ENCODE measurements at regions of chrX and their contacts with region 1.

Region 1: DNA sequence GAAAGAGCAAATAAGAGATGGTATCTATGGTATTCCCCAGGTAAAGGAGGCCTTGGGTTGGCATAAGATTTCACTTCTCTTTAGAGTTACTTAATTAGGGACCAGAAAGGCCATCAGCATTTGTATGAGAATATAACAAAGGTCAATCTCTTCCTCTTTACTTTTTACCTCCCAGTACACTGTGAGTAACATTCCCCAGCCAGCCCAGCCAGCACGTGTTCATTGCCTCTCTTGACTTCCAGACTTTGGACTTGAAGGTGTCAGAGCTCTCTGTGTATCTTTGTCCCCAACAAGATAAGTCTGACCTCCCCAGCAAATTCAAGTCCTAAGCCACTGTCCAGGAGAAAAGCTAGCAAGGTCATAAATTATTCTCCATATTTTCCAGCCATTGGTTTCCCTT is 110.5 kb downstream of the AR start:
- DNase-seq: no peak
- H3K4me3 ChIP-seq: no peak overlapping the region
- H3K27ac ChIP-seq: no peak overlapping the region
- H3K4me1 ChIP-seq: no peaks in the 10 kb centered on the region
- H3K27me3 ChIP-seq: peaks cover 0 to 13% of the 10 kb centered on the region in 2 donors
- CTCF ChIP-seq: no peak
- POLR2A ChIP-seq: no peak

Region 2: DNA sequence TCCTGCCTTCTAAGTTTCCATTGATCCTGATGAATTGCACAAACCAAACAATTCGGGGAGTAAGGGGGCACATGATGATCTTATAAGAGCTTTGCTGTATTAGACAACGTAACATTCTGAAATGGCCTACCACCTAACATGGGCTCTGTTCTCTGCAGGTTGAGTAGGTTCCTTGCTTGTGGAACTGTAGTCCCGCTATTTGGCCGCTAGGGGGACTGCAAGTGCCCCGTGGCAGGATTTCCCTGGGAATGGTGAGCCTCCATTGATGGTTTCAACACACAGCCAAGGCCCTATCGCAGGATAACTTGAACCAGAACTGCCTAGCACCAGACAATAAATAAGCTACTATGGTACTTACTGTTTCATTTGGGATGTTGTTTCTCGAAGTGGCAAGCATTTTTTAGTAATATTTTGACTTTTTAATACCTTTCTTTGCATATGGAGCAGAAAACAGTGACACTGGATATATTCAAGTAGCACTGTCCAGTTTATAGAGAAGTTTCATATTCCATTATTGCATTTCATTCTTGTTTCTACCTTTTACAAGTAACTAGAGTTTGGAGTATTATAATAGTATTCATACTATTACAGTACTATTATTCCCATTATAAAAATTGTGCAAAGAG is 98.6 kb before region 1 on chrX:
- intact Hi-C with region 1: no loop called
- DNase-seq: no peak
- H3K4me3 ChIP-seq: no peak overlapping the region
- H3K27ac ChIP-seq: no peak overlapping the region
- H3K4me1 ChIP-seq: no peaks in the 10 kb centered on the region
- H3K27me3 ChIP-seq: peaks cover 0 to 16% of the 10 kb centered on the region in 2 donors
- CTCF ChIP-seq: peak; percentile 32 to 45 (median 35)
- POLR2A ChIP-seq: no peak

Region 3: GRCh38 chrX:67604979-67605703 is 49.2 kb before region 1 on chrX:
- intact Hi-C with region 1: loop called (anchors 2 kb)
- DNase-seq: no peak
- H3K4me3 ChIP-seq: no peak overlapping the region
- H3K27ac ChIP-seq: no peak overlapping the region
- H3K4me1 ChIP-seq: no peaks in the 10 kb centered on the region
- H3K27me3 ChIP-seq: peaks cover 0 to 8% of the 10 kb centered on the region in 2 donors
- CTCF ChIP-seq: no peak
- POLR2A ChIP-seq: no peak

Region 4: GRCh38 chrX:68490599-68490998 is 836.3 kb after region 1 on chrX:
- intact Hi-C with region 1: no loop called
- DNase-seq: no peak
- H3K4me3 ChIP-seq: no peak overlapping the region
- H3K27ac ChIP-seq: no peak overlapping the region
- H3K4me1 ChIP-seq: no peaks in the 10 kb centered on the region
- H3K27me3 ChIP-seq: peaks cover 0 to 15% of the 10 kb centered on the region in 2 donors
- CTCF ChIP-seq: peak in 1 of 3 donors; percentile 31
- POLR2A ChIP-seq: no peak